ENCODE measurements at regions of chr20 and their contacts with region 1.

Region 1: GRCh38 chr20:50815162-50815989 is 20.5 kb downstream of the BCAS4 start:
- DNase-seq: no peak
- H3K4me3 ChIP-seq: no peak overlapping the region
- CTCF ChIP-seq: no peak

Region 2: DNA sequence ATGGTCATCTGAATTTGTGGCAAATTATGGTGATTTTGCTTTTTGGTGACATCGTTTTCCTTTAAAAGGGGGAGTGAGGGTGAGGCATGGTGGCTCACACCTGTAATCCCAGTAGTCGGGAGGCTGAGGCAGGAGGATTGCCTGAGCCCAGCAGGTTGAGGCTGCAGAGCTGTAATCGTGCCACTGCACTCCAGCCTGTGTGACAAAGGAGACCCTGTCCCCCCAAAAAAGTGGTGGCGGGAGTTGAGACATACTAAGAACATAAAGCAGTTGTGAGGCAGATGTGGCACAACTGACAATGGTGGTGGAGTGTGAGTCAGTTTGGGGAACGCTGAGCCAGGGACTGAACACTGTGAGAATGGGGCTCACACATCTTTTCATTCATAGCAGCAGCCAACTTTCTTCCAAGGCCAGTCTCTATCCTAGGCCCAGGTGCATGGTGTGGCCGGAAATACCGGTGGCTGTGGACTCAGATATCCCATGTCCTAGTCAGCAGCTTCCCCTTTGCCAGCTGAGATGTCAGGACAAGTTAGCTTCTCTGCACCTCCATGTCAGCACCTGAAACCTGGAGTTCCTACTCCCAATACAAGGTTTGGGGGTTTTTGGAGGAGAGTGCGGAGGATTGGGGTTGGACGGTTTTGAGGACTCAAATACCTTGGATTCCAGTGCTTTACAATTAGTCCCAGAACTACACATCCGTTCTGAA is 70.6 kb after region 1 on chr20:
- in situ Hi-C with region 1: loop called (anchors 5 kb)
- DNase-seq: no peak
- H3K4me3 ChIP-seq: no peak overlapping the region
- CTCF ChIP-seq: no peak

Region 3: DNA sequence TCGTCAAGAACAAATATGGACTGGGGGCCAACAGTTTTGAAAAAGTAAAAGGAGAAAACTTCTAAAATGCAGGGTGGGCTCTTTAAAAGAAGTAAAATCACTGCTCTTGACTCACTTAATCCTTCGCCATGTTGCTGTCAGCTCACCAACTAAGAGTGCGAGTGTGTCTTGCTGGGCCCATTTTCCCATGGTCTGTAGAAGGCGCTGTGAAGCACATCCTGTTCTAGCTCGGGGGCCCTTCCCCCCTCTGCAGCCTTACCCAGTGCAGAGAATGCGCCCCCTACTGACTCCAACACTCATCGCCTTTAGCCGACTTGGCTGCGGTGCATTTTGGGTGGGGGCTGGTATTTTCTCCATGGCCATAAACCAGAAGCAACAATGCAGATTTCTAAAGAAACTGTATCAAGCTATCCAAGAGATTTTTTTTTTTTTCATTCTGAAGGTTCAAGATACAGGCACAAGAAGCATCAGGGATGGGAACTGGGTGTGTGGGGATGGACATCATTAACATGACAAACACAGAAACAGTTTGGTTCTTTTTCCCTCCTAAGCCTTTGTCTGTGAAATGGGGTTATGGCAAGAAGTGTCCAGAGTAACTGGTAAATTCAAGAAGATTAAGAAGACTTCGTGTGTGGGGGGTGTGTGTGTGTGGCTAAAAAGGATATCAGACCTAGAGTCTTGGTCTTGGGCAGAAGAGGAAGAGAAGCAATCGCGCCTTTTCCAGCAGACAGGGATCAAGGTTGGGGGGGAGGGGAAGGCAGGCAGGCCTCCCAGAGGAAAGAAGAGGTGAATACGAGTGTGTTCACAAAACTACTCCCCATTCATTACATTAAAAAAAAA is 114.1 kb after region 1 on chr20:
- in situ Hi-C with region 1: loop called (anchors 10 kb)
- DNase-seq: peak; percentile 94
- H3K4me3 ChIP-seq: peak overlapping the region; percentile 78
- CTCF ChIP-seq: peak; percentile 99

Measured in astrocyte of the cerebellum (primary cell).